Activated T-helper 2 cell treated with anti-CD3 and anti-CD28 coated beads, Interferon-gamma antibody, Interleukin-2, Interleukin-4, amounts not matched to agents 10 μg/mL and 5 μg/mL and 100 μg/mL, durations not matched to agents 14 hours and 24 hours and 36 hours (primary cell): ENCODE measurements at regions of chr2 and their contacts with region 1.

Region 1: DNA sequence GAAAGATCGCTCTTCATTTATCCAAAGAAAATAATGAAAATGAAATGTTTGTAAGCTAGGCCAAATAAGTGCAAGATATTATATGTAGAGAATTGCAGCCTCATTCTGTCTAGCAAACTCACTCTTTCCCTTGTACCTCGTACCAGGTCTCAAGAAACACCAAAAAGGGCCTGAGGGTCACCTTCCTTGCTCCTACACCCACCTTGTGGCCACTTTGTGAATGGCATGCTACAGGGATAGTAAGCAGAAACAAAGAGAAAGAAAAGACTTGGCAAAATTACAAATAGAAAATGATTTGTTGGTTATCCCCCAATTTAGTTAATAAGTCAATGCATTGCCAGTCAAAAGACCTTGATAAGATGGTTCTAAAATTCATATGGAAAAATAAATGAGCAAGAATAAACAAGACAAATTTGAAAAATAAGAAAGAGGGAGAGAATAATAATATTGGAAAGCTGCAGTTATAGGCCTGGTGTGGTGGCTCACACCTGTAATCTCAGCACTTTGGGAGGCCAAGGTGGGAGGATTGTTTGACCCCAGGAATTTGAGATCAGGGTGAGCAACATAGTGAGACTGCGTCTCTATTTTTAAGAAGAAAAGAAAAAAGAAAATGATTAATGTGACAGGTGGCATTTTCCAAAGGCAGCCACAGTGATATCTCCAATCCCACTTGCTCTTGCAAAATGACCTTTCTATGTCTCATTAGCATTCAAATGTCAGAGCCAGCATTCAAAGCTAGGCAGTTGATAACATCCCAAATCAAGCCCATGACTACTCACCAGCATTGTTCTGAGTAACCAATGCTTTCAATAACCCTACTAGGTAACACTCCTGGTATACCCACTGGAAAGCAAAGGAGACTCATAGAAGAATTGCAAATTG is 38.8 kb upstream of the BMP10 start:
- DNase-seq: peak; percentile 62
- H3K4me3 Mint-ChIP-seq: no peak overlapping the region
- H3K27ac Mint-ChIP-seq: peak overlapping the region; percentile 70
- H3K4me1 Mint-ChIP-seq: peaks cover 33% of the 10 kb centered on the region
- H3K27me3 Mint-ChIP-seq: no peaks in the 10 kb centered on the region

Region 2: GRCh38 chr2:68709421-68709911 is 200.6 kb before region 1 on chr2:
- intact Hi-C with region 1: loop called (anchors 1 kb)
- DNase-seq: no peak
- H3K4me3 Mint-ChIP-seq: no peak overlapping the region
- H3K27ac Mint-ChIP-seq: no peak overlapping the region
- H3K4me1 Mint-ChIP-seq: peaks cover 28% of the 10 kb centered on the region
- H3K27me3 Mint-ChIP-seq: peaks cover 14% of the 10 kb centered on the region

Region 3: GRCh38 chr2:68774569-68775271 is 135.3 kb before region 1 on chr2:
- intact Hi-C with region 1: loop called (anchors 5 kb)
- DNase-seq: peak; percentile 52
- H3K4me3 Mint-ChIP-seq: peak overlapping the region; percentile 77
- H3K27ac Mint-ChIP-seq: peak overlapping the region; percentile 86
- H3K4me1 Mint-ChIP-seq: peaks cover 83% of the 10 kb centered on the region
- H3K27me3 Mint-ChIP-seq: no peaks in the 10 kb centered on the region

Region 4: GRCh38 chr2:68837164-68837860 is 72.7 kb before region 1 on chr2:
- intact Hi-C with region 1: loop called (anchors 1 kb)
- DNase-seq: peak; percentile 43
- H3K4me3 Mint-ChIP-seq: no peak overlapping the region
- H3K27ac Mint-ChIP-seq: peak overlapping the region; percentile 78
- H3K4me1 Mint-ChIP-seq: peaks cover 49% of the 10 kb centered on the region
- H3K27me3 Mint-ChIP-seq: no peaks in the 10 kb centered on the region

Region 5: GRCh38 chr2:69073928-69074570 is 164.0 kb after region 1 on chr2:
- intact Hi-C with region 1: no loop called
- DNase-seq: no peak
- H3K4me3 Mint-ChIP-seq: no peak overlapping the region
- H3K27ac Mint-ChIP-seq: no peak overlapping the region
- H3K4me1 Mint-ChIP-seq: no peaks in the 10 kb centered on the region
- H3K27me3 Mint-ChIP-seq: peaks cover 38% of the 10 kb centered on the region